Aorta (tissue), 5 donors: ENCODE measurements at regions of chr4 and their contacts with region 1.

Region 1: GRCh38 chr4:168480931-168481611 is 779 bp upstream of the DDX60L start:
- DNase-seq: no peak
- ATAC-seq: peak; percentile 76
- H3K4me3 ChIP-seq: peak overlapping the region; percentile 88 to 93
- H3K27ac ChIP-seq: peak overlapping the region; percentile 67 to 86
- H3K4me1 ChIP-seq: peaks cover 0 to 2% of the 10 kb centered on the region in 2 donors
- H3K27me3 ChIP-seq: no peaks in the 10 kb centered on the region

Region 2: GRCh38 chr4:168318266-168318895 is 162.7 kb before region 1 on chr4 and contains the start of gene DDX60:
- intact Hi-C with region 1: loop called (anchors 2 to 5 kb)
- DNase-seq: peak; percentile 84 to 87
- ATAC-seq: peak; percentile 94
- H3K4me3 ChIP-seq: peak within 1 kb of the TSS; percentile 90 to 100
- H3K27ac ChIP-seq: peak within 1 kb of the TSS in 1 of 2 donors; percentile 94
- H3K4me1 ChIP-seq: no peaks in the 10 kb centered on the region
- H3K27me3 ChIP-seq: no peaks in the 10 kb centered on the region
- total RNA-seq, gene DDX60: 19.1 to 24.4 TPM